ENCODE measurements at regions of chr16 and their contacts with region 1.

Region 1: DNA sequence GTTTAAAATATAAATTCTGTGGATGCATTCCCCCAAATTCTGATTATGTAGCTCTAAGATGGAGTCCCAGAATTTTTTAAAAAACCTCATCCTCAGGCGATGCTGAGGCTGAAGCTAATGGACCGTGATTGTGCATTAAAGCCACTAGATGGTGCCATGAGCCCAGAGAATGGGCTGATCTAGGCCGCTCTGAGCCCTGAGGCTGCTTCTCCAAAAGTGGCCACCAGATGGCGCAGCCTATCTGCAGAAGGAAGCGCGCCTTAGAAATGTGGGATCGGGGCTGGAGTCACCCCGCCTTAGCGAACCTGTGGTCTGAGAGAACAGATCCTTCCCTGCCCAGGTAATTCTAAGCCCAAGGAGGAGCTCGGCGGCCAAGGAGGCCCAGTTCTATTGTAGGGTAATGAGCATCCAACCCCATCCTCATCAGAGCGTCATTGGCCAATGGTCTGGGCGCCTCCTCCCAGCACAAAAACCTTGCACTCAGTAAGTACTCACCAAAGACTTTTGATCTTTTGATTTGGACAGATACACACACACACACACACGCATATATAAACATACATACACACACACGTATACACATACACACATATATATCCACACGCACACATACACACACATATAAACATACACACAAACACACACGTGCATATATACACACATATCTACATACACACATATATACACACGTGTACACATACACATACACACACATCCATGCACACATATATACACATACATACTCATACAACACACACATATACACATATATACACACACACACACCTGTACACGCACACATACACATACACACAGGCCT is 13.7 kb upstream of the MMP2 start:
- DNase-seq: peak; percentile 64
- ATAC-seq: peak; percentile 95
- H3K4me3 ChIP-seq: no peak overlapping the region
- H3K27ac ChIP-seq: no peak overlapping the region
- H3K4me1 ChIP-seq: peaks cover 0 to 2% of the 10 kb centered on the region in 2 experiments; a peak in 2 of 4 replicates
- H3K27me3 ChIP-seq: no peaks in the 10 kb centered on the region
- CTCF ChIP-seq: peak; percentile 98 to 100 (median 100)
- POLR2A ChIP-seq: no peak
- RAD21 ChIP-seq: peak; percentile 100

Region 2: DNA sequence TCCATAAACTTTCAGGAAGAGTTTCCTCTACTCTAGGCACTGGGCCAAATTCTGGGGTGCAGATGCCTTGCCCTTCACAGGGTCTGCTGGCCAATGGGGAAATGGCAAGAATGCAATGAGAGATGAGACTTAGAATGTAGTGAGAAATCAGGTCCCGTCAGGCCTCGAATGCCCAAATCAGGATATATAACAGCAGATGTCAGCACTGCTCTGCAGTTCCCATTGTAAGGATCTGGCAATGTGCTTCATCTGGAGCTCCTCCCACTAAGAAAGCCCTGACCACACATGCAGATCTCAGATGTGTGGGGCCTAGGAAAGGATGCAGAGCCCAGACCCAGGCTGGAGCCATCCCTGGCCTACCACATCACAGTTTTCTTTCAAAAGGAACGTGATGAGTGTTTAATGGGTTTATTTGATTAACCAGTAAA is 29.7 kb after region 1 on chr16:
- CTCF ChIA-PET with region 1: interaction called, 12 read pairs
- POLR2A ChIA-PET with region 1: no interaction called
- RAD21 ChIA-PET with region 1: no interaction called
- intact Hi-C with region 1: no loop called
- DNase-seq: no peak
- ATAC-seq: peak; percentile 70
- H3K4me3 ChIP-seq: no peak overlapping the region
- H3K27ac ChIP-seq: no peak overlapping the region
- H3K4me1 ChIP-seq: peaks cover 5 to 9% of the 10 kb centered on the region in 2 experiments
- H3K27me3 ChIP-seq: 0 out of 2 replicates have a peak, but pooled peaks cover 2% of the 10 kb centered on the region
- CTCF ChIP-seq: peak; percentile 5 to 46 (median 25); a peak in 3 of 6 replicates
- POLR2A ChIP-seq: no peak
- RAD21 ChIP-seq: peak; percentile 72

Region 3: GRCh38 chr16:55543472-55543871 is 78.2 kb after region 1 on chr16:
- CTCF ChIA-PET with region 1: interaction called, 45 read pairs
- POLR2A ChIA-PET with region 1: no interaction called
- RAD21 ChIA-PET with region 1: interaction called, 4 to 10 read pairs
- intact Hi-C with region 1: loop called (anchors 1 kb)
- DNase-seq: no peak
- ATAC-seq: no peak; the same call in 1 of the 2 replicates
- H3K4me3 ChIP-seq: no peak overlapping the region
- H3K27ac ChIP-seq: no peak overlapping the region
- H3K4me1 ChIP-seq: peaks cover 0 to 5% of the 10 kb centered on the region in 2 experiments; a peak in 1 of 4 replicates
- H3K27me3 ChIP-seq: no peaks in the 10 kb centered on the region
- CTCF ChIP-seq: peak in 2 of 3 experiments; percentile 33 to 82; a peak in 4 of 6 replicates
- POLR2A ChIP-seq: no peak
- RAD21 ChIP-seq: peak; percentile 61

Region 4: DNA sequence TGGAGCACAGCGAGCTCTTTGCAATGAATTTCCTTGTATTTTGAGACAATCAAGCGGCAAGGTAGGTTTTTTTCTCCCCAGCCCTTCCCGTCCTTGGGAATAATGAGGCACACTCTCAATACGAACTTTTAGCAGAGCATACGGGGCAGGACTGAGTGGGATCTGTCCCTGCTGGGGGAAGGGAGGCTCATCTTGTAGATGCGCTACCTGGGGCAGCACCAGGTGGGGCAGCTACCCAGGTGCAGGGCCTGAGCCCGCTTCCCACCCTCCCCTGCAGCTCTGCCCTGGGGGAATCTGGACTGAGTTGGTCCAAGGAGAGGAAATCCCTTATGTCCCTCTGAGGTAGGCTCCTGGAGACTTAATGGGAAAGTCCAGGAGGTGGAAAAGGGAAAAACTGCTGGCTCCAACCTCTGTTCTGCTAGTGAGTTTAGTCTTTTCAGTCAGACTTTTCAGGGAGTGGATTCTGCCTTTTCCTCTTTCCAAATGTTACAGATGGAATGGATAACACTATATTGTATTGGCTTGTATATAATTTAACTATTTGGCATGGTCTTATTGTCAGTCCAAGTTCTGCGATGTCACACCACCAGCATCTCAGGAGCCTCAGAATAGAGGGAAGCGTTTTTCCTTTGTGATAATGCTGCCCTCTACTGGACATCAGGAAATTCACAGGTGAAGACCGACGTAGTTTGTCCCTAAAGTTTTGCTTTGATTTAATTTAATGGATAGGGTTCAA is 377.2 kb after region 1 on chr16:
- CTCF ChIA-PET with region 1: interaction called, 11 read pairs
- POLR2A ChIA-PET with region 1: no interaction called
- RAD21 ChIA-PET with region 1: interaction called in 1 of 2 experiments, 4 read pairs
- intact Hi-C with region 1: loop called (anchors 1 kb)
- DNase-seq: peak; percentile 18
- ATAC-seq: peak; percentile 76
- H3K4me3 ChIP-seq: no peak overlapping the region
- H3K27ac ChIP-seq: no peak overlapping the region
- H3K4me1 ChIP-seq: no peaks in the 10 kb centered on the region
- H3K27me3 ChIP-seq: peaks cover 24% of the 10 kb centered on the region
- CTCF ChIP-seq: peak; percentile 58 to 75 (median 74); a peak in 5 of 6 replicates
- POLR2A ChIP-seq: no peak
- RAD21 ChIP-seq: peak; percentile 77

Region 5: GRCh38 chr16:56356276-56357240 is 891.3 kb after region 1 on chr16:
- CTCF ChIA-PET with region 1: interaction called, 10 read pairs
- POLR2A ChIA-PET with region 1: no interaction called
- RAD21 ChIA-PET with region 1: no interaction called
- intact Hi-C with region 1: no loop called
- DNase-seq: peak; percentile 72
- ATAC-seq: peak; percentile 98
- H3K4me3 ChIP-seq: peak overlapping the region; percentile 29 to 55
- H3K27ac ChIP-seq: 0 out of 2 replicates have a peak overlapping the region, but pooled peaks have one; percentile 12
- H3K4me1 ChIP-seq: peaks cover 13 to 16% of the 10 kb centered on the region in 2 experiments; a peak in 3 of 4 replicates
- H3K27me3 ChIP-seq: no peaks in the 10 kb centered on the region
- CTCF ChIP-seq: peak; percentile 79 to 94 (median 92)
- POLR2A ChIP-seq: no peak
- RAD21 ChIP-seq: peak; percentile 84